ENCODE measurements at regions of chr2 and their contacts with region 1.

Region 1: GRCh38 chr2:149561309-149561926 is 26.2 kb downstream of the MMADHC start:
- DNase-seq: no peak
- H3K4me3 ChIP-seq: no peak overlapping the region
- H3K27ac ChIP-seq: no peak overlapping the region
- H3K27me3 ChIP-seq: no peaks in the 10 kb centered on the region
- CTCF ChIP-seq: peak; percentile 78 to 99 (median 93)

Region 2: GRCh38 chr2:147937744-147938349 is 1623.6 kb before region 1 on chr2:
- intact Hi-C with region 1: loop called in 1 of 2 experiments (anchors 10 kb)
- DNase-seq: no peak
- H3K4me3 ChIP-seq: no peak overlapping the region
- H3K27ac ChIP-seq: no peak overlapping the region
- H3K27me3 ChIP-seq: no peaks in the 10 kb centered on the region
- CTCF ChIP-seq: peak; percentile 75 to 99 (median 90)

Region 3: DNA sequence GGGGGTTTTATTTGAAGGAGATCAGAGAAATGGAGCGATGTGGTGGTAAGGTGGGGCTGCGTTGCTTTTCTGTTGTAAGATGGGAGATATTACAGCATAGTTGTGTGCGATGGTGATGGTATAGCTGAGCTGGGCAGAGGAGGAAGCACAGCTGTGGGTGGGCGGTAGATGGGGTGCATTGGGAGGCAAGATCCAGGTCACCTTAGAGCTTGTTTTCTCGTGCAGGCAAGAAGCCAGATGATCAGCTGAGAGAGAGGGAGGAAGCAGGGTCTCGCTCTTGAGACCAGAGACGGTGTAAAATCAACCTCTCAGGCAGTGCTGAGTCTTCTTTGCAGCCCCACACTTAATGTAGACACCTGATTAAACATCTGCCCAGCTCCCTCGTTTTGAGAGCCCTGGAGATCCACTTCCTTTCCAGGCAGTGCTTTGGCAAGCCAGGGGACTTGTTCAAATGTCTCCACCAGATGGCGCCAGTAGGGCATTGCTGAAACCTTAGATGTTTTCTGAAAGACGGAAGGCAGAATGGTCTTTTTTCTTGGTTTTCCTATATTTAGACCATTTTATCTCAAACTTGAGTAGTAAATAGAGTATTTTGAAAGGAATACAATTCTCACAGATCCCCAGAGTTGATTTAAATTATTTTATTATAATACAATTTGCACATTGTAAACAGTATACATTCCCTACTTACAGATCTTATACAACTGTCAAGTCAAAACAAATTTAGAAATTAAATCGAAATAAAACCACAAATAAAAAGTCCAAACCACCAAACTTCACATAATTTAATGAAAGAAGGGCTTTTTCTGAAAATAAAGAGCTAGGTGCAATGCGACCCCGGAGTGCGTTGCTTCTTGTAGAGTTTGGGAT is 544.1 kb before region 1 on chr2:
- intact Hi-C with region 1: loop called (anchors 2 to 5 kb)
- DNase-seq: peak; percentile 61 to 91 (median 84)
- H3K4me3 ChIP-seq: peak overlapping the region in 1 of 59 donors; percentile 29
- H3K27ac ChIP-seq: peak overlapping the region in 36 of 59 donors; percentile 1 to 77 (median 26)
- H3K27me3 ChIP-seq: no peaks in the 10 kb centered on the region
- CTCF ChIP-seq: peak; percentile 78 to 98 (median 94)

Region 4: DNA sequence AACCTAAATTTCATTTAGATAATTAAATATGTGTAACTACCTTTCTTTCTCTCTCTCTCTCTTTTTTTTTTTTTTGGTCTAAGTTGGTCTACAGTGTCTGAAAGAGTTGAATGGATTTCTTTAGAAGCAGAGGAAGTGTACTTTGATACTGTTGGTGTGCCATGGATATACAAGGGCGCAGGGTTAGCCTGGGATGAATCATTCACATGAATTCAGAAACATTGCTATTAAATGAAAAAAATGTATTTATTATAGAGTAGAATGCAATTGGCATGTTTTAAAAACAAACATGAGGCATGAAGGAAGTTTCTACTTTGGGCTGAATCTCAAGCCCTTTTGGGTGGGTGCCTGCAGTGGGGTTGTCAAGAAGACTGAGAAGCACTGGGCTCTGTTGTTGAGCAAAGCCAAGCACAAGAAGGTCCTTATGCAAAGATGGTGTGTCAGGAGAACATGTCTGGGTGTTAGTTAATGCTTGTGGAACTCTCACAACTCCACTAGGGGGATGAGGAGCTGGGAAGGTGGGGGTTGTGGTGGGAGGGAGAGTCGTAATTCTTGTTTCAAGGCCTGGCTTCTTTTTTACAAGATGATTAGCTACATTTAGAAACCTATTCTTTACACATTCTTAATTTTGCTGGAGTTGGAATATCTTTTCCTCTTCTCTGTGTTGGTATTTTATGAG is 173.2 kb before region 1 on chr2:
- intact Hi-C with region 1: no loop called
- DNase-seq: no peak
- H3K4me3 ChIP-seq: no peak overlapping the region
- H3K27ac ChIP-seq: no peak overlapping the region
- H3K27me3 ChIP-seq: peaks cover 0 to 6% (median 0%) of the 10 kb centered on the region in 45 donors
- CTCF ChIP-seq: no peak

Region 5: GRCh38 chr2:149513461-149513860 is 48.0 kb before region 1 on chr2:
- intact Hi-C with region 1: no loop called
- DNase-seq: no peak
- H3K4me3 ChIP-seq: no peak overlapping the region
- H3K27ac ChIP-seq: no peak overlapping the region
- H3K27me3 ChIP-seq: peaks cover 0 to 12% (median 0%) of the 10 kb centered on the region in 45 donors
- CTCF ChIP-seq: no peak

Measured in dorsolateral prefrontal cortex (tissue), 120 donors.